ENCODE measurements at regions of chr17 and their contacts with region 1.

Region 1: GRCh38 chr17:19766422-19767270 is 18.5 kb upstream of the ALDH3A1 start:
- DNase-seq: no peak
- H3K4me3 ChIP-seq: no peak overlapping the region
- H3K27me3 ChIP-seq: no peaks in the 10 kb centered on the region; the same call in 1 of the 2 replicates
- CTCF ChIP-seq: peak; percentile 100

Region 2: DNA sequence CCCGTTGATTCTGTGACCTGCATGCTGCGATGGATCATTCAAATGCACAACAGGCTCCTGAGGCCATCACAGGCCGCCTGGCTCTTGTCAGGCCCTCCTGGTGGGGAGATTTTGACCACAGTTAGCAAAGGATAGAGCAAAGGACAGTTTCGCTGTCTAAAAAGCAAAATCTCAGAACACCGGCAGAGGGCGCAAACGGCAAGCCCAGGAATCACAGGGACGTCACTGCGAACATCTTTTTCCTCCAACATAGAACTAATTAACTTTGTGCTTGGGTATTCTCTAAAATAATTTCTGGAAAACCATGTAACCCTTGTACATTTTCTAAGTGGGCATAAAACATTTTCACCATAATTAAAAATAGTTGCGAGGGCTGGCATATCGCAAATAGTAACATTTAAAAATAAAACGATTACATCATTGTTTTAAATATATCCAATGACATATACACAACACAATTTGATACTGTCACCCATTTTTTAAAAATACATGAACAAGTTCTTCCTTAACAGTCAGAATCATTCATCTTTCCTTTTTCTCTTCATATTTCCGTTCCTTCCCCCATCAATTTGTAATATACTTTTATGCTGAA is 252.7 kb before region 1 on chr17:
- CTCF ChIA-PET with region 1: interaction called, 105 read pairs
- POLR2A ChIA-PET with region 1: no interaction called
- DNase-seq: no peak
- H3K4me3 ChIP-seq: no peak overlapping the region
- H3K27me3 ChIP-seq: no peaks in the 10 kb centered on the region
- CTCF ChIP-seq: peak; percentile 91

Region 3: GRCh38 chr17:19648475-19649406 is 117.9 kb before region 1 on chr17 and contains the start of gene ALDH3A2:
- CTCF ChIA-PET with region 1: interaction called, 3 read pairs
- POLR2A ChIA-PET with region 1: interaction called, 12 read pairs
- DNase-seq: peak; percentile 46
- H3K4me3 ChIP-seq: peak within 1 kb of the TSS; percentile 58
- H3K27me3 ChIP-seq: no peaks in the 10 kb centered on the region
- CTCF ChIP-seq: peak; percentile 21; the same call in 1 of the 2 replicates
- polyA plus RNA-seq, gene ALDH3A2: 10.2 and 13.6 TPM in 2 replicates

Region 4: GRCh38 chr17:19744922-19745757 is 21.5 kb before region 1 on chr17:
- CTCF ChIA-PET with region 1: interaction called, 84 read pairs
- POLR2A ChIA-PET with region 1: no interaction called
- DNase-seq: no peak
- H3K4me3 ChIP-seq: peak overlapping the region; percentile 21
- H3K27me3 ChIP-seq: peaks cover 7% of the 10 kb centered on the region; the same call in 1 of the 2 replicates
- CTCF ChIP-seq: peak; percentile 95

Region 5: GRCh38 chr17:19753049-19753444 is 13.6 kb before region 1 on chr17:
- CTCF ChIA-PET with region 1: interaction called, 84 read pairs
- POLR2A ChIA-PET with region 1: no interaction called
- DNase-seq: no peak
- H3K4me3 ChIP-seq: no peak overlapping the region
- H3K27me3 ChIP-seq: peaks cover 4% of the 10 kb centered on the region; the same call in 1 of the 2 replicates
- CTCF ChIP-seq: no peak

Measured in BJ (cell line).